PC-9 (cell line): ENCODE measurements at regions of chr12 and their contacts with region 1.

Region 1: DNA sequence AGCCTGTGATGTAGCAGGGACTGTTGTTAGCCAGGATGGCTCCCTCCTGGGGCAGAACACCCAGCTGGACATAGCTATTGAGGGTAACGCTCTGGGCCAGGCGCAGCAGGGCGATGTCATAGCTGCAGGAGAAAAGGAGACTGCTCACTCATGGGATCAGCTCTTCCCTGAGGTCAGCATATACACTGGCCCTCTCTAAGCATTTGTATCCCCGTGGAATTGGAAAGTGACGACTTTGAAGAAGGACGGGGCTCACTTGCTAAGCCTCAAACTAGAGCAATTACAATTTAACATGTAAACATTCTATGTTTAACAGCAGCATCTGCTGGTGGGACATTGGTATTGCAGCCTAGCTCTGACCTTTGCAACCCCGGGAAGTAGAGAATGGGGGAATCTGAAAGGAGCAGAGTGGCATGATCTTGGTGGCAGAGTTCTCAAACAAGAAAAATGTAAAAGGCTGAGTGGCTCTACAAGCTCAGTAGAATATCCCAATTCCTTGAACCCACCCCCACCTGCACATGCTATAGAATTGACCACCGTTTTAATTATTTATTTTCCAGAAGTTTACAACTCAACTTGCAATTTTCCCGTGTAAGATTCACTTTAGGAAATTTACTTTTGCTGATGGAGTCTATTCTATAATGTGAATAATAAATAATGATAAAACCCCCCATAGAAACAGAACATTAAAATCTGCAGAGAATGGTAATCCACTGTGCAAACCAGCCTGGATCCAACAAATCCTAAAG is 5.0 kb downstream of the CELA1 start:
- DNase-seq: peak; percentile 52 to 66
- H3K4me3 ChIP-seq: no peak overlapping the region
- H3K27ac ChIP-seq: no peak overlapping the region
- H3K4me1 ChIP-seq: peaks cover 8% of the 10 kb centered on the region
- H3K27me3 ChIP-seq: no peaks in the 10 kb centered on the region
- CTCF ChIP-seq: peak; percentile 99

Region 2: DNA sequence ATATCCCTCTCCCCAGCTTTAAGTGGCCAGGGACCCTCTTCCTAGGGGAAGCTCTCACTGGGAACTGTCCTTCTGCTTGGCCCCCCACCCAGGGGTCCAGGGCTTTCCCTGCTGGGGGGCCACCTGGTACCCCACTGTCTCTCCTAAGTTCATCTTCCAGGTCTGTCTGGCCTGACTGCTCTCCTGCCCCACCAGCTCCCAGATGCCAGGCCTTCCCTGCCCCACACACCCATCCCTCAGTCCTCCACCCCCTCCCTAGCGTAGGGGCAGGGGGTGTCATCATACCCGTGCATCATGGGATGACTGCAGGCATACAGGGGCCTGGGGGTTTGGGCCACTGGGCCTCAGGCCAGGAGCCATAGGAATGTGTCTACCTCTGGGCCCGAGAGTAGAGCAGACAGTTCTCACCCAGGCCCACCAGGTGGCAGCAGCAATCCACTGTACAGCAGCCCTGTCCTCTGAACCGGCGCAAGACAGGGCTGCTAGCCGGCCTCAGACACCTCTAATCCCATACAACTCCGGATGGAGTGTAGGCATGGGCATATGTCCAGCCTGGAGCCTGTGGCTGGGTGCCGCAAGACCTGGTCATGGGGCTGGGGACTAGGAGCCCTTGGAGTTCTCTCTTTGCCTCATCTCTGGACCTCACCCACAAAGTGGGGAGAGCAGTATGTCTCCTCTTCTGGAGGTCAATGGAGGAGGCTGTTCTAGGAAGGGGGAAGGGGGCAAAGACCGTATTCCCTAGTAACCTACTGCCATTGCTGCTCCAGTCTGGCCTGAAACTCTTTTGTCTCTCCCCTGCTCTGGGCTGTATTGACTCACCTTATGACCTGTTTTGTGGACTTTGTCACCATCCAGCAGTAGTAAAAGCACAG is 1266.3 kb before region 1 on chr12:
- CTCF ChIA-PET with region 1: no interaction called
- POLR2A ChIA-PET with region 1: no interaction called
- intact Hi-C with region 1: no loop called
- DNase-seq: peak; percentile 71 to 84
- H3K4me3 ChIP-seq: no peak overlapping the region
- H3K27ac ChIP-seq: no peak overlapping the region
- H3K4me1 ChIP-seq: no peaks in the 10 kb centered on the region
- H3K27me3 ChIP-seq: no peaks in the 10 kb centered on the region
- CTCF ChIP-seq: peak; percentile 91

Region 3: DNA sequence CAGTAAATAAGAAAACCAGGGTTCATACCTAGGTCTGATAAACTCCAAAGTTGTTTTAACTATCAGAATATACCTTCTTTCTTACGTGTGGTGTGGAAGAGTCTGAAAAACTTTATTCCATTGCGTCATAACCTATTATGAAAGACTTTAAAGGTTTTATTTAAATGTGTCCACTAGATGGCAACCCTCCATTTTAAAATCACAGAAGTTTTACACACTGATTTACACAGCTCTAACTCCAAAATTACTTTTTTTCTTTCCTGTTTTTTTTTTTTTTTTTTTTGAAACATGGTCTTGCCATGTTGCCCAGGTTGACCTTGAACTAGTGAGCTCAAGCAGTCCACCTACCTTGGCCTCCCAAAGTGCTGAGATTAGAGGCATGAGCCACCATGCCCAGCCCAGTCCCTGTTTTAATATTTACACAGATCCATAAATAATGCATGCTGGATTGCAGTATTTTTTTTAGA is 516.0 kb before region 1 on chr12:
- CTCF ChIA-PET with region 1: no interaction called
- POLR2A ChIA-PET with region 1: no interaction called
- intact Hi-C with region 1: loop called (anchors 5 kb)
- DNase-seq: peak in 1 of 2 experiments; percentile 66
- H3K4me3 ChIP-seq: no peak overlapping the region
- H3K27ac ChIP-seq: peak overlapping the region; percentile 47
- H3K4me1 ChIP-seq: peaks cover 4% of the 10 kb centered on the region
- H3K27me3 ChIP-seq: no peaks in the 10 kb centered on the region
- CTCF ChIP-seq: peak; percentile 79

Region 4: GRCh38 chr12:51083126-51083833 is 258.2 kb before region 1 on chr12 and contains the start of gene CSRNP2:
- CTCF ChIA-PET with region 1: no interaction called
- POLR2A ChIA-PET with region 1: interaction called, 4 read pairs
- intact Hi-C with region 1: loop called (anchors 10 kb)
- DNase-seq: peak; percentile 89 to 96
- H3K4me3 ChIP-seq: peak within 1 kb of the TSS; percentile 84
- H3K27ac ChIP-seq: peak within 1 kb of the TSS; percentile 30
- H3K4me1 ChIP-seq: peaks cover 8% of the 10 kb centered on the region
- H3K27me3 ChIP-seq: no peaks in the 10 kb centered on the region
- CTCF ChIP-seq: no peak
- total RNA-seq, gene CSRNP2: 19.3 and 23.1 TPM in 2 replicates

Region 5: GRCh38 chr12:51318837-51319599 is 22.4 kb before region 1 on chr12:
- CTCF ChIA-PET with region 1: interaction called, 13 read pairs
- POLR2A ChIA-PET with region 1: no interaction called
- intact Hi-C with region 1: no loop called
- DNase-seq: no peak
- H3K4me3 ChIP-seq: no peak overlapping the region
- H3K27ac ChIP-seq: no peak overlapping the region
- H3K4me1 ChIP-seq: peaks cover 52% of the 10 kb centered on the region
- H3K27me3 ChIP-seq: no peaks in the 10 kb centered on the region
- CTCF ChIP-seq: no peak

Region 6: GRCh38 chr12:51371295-51371953 is 30.0 kb after region 1 on chr12:
- CTCF ChIA-PET with region 1: interaction called, 4 read pairs
- POLR2A ChIA-PET with region 1: interaction called, 10 read pairs
- intact Hi-C with region 1: no loop called
- DNase-seq: peak; percentile 94 to 98
- H3K4me3 ChIP-seq: peak overlapping the region; percentile 6; the same call in 1 of the 2 replicates
- H3K27ac ChIP-seq: peak overlapping the region; percentile 84
- H3K4me1 ChIP-seq: peaks cover 35% of the 10 kb centered on the region
- H3K27me3 ChIP-seq: no peaks in the 10 kb centered on the region
- CTCF ChIP-seq: no peak